ENCODE measurements at regions of chr3 and their contacts with region 1.

Region 1: DNA sequence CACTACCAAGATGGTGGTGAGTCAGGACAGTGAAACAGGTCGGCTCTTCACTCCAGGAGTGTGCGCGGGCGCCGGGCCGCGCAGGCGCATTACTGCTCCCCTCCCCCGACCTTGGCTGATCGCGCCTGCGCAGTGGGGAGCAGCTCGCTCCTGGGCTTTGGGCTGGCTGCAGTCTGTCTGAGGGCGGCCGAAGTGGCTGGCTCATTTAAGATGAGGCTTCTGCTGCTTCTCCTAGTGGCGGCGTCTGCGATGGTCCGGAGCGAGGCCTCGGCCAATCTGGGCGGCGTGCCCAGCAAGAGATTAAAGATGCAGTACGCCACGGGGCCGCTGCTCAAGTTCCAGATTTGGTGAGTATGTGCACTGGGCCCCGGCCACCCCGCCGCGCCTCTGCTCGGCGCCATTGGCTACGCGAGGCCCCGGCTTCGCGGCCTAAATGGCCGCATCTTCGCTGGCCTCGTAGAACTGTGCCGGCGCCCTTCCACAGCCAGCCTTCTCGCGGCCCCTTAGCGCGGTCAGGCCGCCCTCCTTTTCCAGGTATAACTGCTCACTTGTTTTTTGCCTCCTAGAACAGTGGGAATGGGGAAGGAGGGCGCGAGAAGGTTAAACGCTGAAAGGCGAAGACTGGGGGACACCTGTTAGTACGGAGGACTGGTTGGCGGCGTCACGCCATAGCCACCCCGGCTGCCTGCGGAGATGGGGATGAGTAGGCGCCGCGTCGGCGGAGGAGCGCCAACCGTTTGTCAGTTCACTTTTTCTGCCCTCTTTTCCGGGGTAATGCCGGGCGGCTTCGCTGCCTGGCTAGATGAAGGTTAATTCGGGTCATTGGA is at the start of gene SELENOT:
- DNase-seq: peak; percentile 97
- ATAC-seq: peak; percentile 70
- H3K4me3 ChIP-seq: peak within 1 kb of the TSS; percentile 66 to 90 (median 87)
- H3K4me3 Mint-ChIP-seq: peak within 1 kb of the TSS; percentile 95
- H3K27ac ChIP-seq: peak within 1 kb of the TSS; percentile 99 to 100
- H3K27ac Mint-ChIP-seq: peak within 1 kb of the TSS; percentile 100
- H3K4me1 ChIP-seq: peaks cover 66 to 69% of the 10 kb centered on the region in 2 donors
- H3K4me1 Mint-ChIP-seq: peaks cover 84% of the 10 kb centered on the region
- H3K27me3 ChIP-seq: no peaks in the 10 kb centered on the region
- H3K27me3 Mint-ChIP-seq: no peaks in the 10 kb centered on the region
- CTCF ChIP-seq: peak; percentile 38
- total RNA-seq, gene SELENOT: 73.1 and 76.7 TPM in 2 replicates

Region 2: DNA sequence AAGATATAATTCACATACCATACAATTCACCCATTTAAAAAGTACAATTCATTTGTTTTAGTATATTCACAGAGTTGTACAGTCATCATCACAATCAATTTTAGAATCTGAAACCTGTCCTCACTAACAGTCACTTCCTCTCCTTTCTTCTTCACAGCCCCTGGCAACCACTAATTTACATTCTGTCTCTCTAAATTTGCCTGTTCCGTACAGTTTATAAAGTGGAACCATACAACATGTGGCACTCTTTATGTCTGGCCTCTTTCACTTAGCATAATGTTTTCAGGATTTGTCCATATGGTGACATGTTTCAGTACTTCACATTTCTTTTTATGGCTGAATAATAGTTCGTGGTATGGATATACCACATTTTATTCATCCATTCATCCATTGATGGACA is 77.7 kb after region 1 on chr3:
- CTCF ChIA-PET with region 1: no interaction called
- POLR2A ChIA-PET with region 1: no interaction called
- intact Hi-C with region 1: loop called (anchors 5 kb)
- DNase-seq: peak; percentile 69
- ATAC-seq: peak; percentile 96
- H3K4me3 ChIP-seq: peak overlapping the region in 1 of 5 experiments; percentile 33
- H3K4me3 Mint-ChIP-seq: peak overlapping the region; percentile 83
- H3K27ac ChIP-seq: peak overlapping the region in 1 of 2 donors; percentile 56
- H3K27ac Mint-ChIP-seq: peak overlapping the region; percentile 2
- H3K4me1 ChIP-seq: peaks cover 29 to 35% of the 10 kb centered on the region in 2 donors
- H3K4me1 Mint-ChIP-seq: peaks cover 25% of the 10 kb centered on the region
- H3K27me3 ChIP-seq: no peaks in the 10 kb centered on the region
- H3K27me3 Mint-ChIP-seq: no peaks in the 10 kb centered on the region
- CTCF ChIP-seq: no peak

Region 3: GRCh38 chr3:151146071-151146730 is 542.8 kb after region 1 on chr3:
- CTCF ChIA-PET with region 1: no interaction called
- POLR2A ChIA-PET with region 1: no interaction called
- intact Hi-C with region 1: loop called (anchors 5 kb)
- DNase-seq: peak; percentile 80
- ATAC-seq: peak; percentile 99
- H3K4me3 ChIP-seq: peak overlapping the region in 3 of 5 experiments; percentile 7 to 48 (median 29)
- H3K4me3 Mint-ChIP-seq: no peak overlapping the region
- H3K27ac ChIP-seq: no peak overlapping the region
- H3K27ac Mint-ChIP-seq: no peak overlapping the region
- H3K4me1 ChIP-seq: peaks cover 9 to 17% of the 10 kb centered on the region in 2 donors
- H3K4me1 Mint-ChIP-seq: peaks cover 4% of the 10 kb centered on the region
- H3K27me3 ChIP-seq: peaks cover 0 to 4% (median 0%) of the 10 kb centered on the region in 4 experiments
- H3K27me3 Mint-ChIP-seq: peaks cover 3% of the 10 kb centered on the region
- CTCF ChIP-seq: peak; percentile 86

Region 4: GRCh38 chr3:151384741-151385174 is 781.4 kb after region 1 on chr3 and contains the start of gene P2RY12:
- CTCF ChIA-PET with region 1: no interaction called
- POLR2A ChIA-PET with region 1: no interaction called
- intact Hi-C with region 1: loop called (anchors 5 kb)
- DNase-seq: peak; percentile 62
- ATAC-seq: peak; percentile 24
- H3K4me3 ChIP-seq: peak within 1 kb of the TSS in 4 of 5 experiments; percentile 18 to 53 (median 35)
- H3K4me3 Mint-ChIP-seq: peak within 1 kb of the TSS; percentile 81
- H3K27ac ChIP-seq: peak within 1 kb of the TSS; percentile 59 to 87
- H3K27ac Mint-ChIP-seq: peak within 1 kb of the TSS; percentile 85
- H3K4me1 ChIP-seq: peaks cover 55 to 63% of the 10 kb centered on the region in 2 donors
- H3K4me1 Mint-ChIP-seq: peaks cover 64% of the 10 kb centered on the region
- H3K27me3 ChIP-seq: no peaks in the 10 kb centered on the region
- H3K27me3 Mint-ChIP-seq: no peaks in the 10 kb centered on the region
- CTCF ChIP-seq: no peak
- total RNA-seq, gene P2RY12: 0.73 and 0.79 TPM in 2 replicates

Measured in B cell (primary cell).